Heart right ventricle (tissue), 16 donors: ENCODE measurements at regions of chr16 and their contacts with region 1.

Region 1: DNA sequence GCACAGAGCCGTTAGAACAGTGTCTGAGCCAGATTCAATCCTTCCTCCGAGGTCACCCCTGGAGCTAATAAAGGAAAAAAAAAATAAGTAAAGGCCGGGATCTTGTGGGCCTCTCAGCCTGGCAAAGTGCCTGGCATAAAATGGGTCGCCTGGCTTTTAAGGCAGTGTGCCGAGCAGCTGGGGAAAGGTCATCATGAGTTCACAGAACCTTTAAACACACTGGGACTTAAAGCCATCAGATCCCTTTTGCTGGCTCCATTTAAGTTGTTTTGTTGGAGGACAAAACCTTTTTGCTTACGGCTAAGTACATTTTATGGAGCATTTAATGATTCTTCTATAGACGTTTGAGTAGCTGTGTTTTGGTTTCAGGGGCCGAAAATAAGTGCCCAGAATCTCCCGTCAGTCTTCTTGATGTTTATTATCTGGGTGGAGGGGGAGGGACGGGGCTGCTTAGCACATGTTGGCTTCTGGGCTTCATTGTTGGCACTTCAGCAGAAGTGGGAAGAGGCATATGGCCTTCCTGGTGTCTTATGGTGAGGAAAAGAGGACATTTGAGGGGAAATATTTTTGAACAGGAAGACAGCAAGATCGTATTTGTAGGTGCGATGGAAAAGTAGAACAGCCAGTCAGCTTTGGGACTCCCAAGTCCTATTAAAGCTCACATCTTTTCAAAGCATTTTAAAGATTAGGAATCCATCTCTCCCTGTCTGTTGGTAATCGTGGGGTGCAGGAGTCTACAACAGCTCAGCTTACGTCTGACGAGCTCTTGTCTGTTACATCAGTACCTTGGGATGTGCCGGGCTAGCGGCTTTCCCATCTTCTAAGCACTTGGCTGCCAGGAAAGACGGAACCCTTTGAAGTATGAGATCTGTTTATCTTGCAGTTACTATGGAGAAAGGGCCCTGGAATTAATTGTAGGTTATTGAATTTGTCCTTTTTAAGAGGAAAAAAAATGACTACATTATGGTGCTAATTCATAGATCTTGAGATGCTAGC is 31.1 kb downstream of the RBFOX1 start:
- DNase-seq: peak; percentile 44 to 48
- ATAC-seq: peak; percentile 36 to 75 (median 64)
- H3K4me3 ChIP-seq: no peak overlapping the region
- H3K27ac ChIP-seq: peak overlapping the region; percentile 32 to 72 (median 54)
- H3K4me1 ChIP-seq: peaks cover 0 to 48% (median 13%) of the 10 kb centered on the region in 9 donors
- H3K27me3 ChIP-seq: no peaks in the 10 kb centered on the region
- CTCF ChIP-seq: no peak

Region 2: GRCh38 chr16:7344830-7345780 is 18.6 kb before region 1 on chr16:
- intact Hi-C with region 1: loop called in 1 of 10 experiments (anchors 2 kb)
- DNase-seq: peak; percentile 35 to 50
- ATAC-seq: peak; percentile 79 to 96 (median 88)
- H3K4me3 ChIP-seq: peak overlapping the region in 1 of 10 donors; percentile 23
- H3K27ac ChIP-seq: peak overlapping the region; percentile 50 to 85 (median 70)
- H3K4me1 ChIP-seq: peaks cover 0 to 34% (median 9%) of the 10 kb centered on the region in 9 donors
- H3K27me3 ChIP-seq: no peaks in the 10 kb centered on the region
- CTCF ChIP-seq: peak in 1 of 9 donors; percentile 10

Region 3: GRCh38 chr16:7440886-7441400 is 77.2 kb after region 1 on chr16:
- intact Hi-C with region 1: no loop called
- DNase-seq: no peak
- ATAC-seq: no peak
- H3K4me3 ChIP-seq: no peak overlapping the region
- H3K27ac ChIP-seq: no peak overlapping the region
- H3K4me1 ChIP-seq: peaks cover 0 to 7% (median 0%) of the 10 kb centered on the region in 9 donors
- H3K27me3 ChIP-seq: no peaks in the 10 kb centered on the region
- CTCF ChIP-seq: no peak